ENCODE measurements at regions of chr9 and their contacts with region 1.

Region 1: DNA sequence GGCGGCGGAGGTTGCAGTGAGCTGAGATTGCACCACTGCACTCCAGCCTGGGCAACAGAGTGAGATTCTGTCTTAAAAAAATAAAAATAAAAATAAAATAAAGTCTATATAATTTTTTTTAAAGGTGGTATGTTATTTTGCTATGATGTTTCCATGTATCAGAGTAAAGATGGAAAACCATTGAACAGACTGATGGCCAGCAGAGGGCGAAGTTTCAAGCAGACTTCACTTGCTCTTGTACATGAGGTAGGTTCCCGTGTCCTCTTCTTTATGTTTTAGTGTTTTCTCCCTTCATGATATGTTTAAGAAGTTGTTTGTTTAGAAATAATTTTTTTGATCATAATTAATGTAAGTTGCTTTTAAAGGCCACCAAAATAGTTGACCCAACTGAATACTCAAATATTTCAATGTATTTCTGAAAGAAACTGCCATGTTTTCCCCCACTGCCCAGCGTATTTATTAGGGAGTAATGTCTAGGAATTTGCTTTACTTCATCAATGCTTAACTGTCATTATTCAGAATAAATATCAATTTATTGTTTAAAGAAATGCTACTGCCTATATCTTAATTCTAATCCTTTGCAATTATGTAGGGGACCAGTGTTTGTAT is 146.4 kb downstream of the HACD4 start:
- DNase-seq: peak; percentile 75
- H3K4me3 Mint-ChIP-seq: no peak overlapping the region
- H3K27ac Mint-ChIP-seq: no peak overlapping the region
- H3K4me1 Mint-ChIP-seq: no peaks in the 10 kb centered on the region
- H3K27me3 Mint-ChIP-seq: no peaks in the 10 kb centered on the region

Region 2: GRCh38 chr9:20873240-20873865 is 11.7 kb before region 1 on chr9:
- CTCF ChIA-PET with region 1: interaction called, 12 read pairs
- DNase-seq: no peak
- H3K4me3 Mint-ChIP-seq: no peak overlapping the region
- H3K27ac Mint-ChIP-seq: no peak overlapping the region
- H3K4me1 Mint-ChIP-seq: peaks cover 10% of the 10 kb centered on the region
- H3K27me3 Mint-ChIP-seq: no peaks in the 10 kb centered on the region

Region 3: GRCh38 chr9:21027295-21027694 is 142.2 kb after region 1 on chr9:
- CTCF ChIA-PET with region 1: no interaction called
- DNase-seq: no peak
- H3K4me3 Mint-ChIP-seq: no peak overlapping the region
- H3K27ac Mint-ChIP-seq: no peak overlapping the region
- H3K4me1 Mint-ChIP-seq: peaks cover 35% of the 10 kb centered on the region
- H3K27me3 Mint-ChIP-seq: no peaks in the 10 kb centered on the region

Region 4: GRCh38 chr9:21110708-21111576 is 225.9 kb after region 1 on chr9:
- CTCF ChIA-PET with region 1: interaction called, 39 read pairs
- DNase-seq: no peak
- H3K4me3 Mint-ChIP-seq: no peak overlapping the region
- H3K27ac Mint-ChIP-seq: no peak overlapping the region
- H3K4me1 Mint-ChIP-seq: no peaks in the 10 kb centered on the region
- H3K27me3 Mint-ChIP-seq: peaks cover 10% of the 10 kb centered on the region

Measured in activated naive CD4-positive, alpha-beta T cell treated with anti-CD3 and anti-CD28 coated beads, Interleukin-2, amount 10 ng/mL, durations not matched to agents 7 days and 5 days (primary cell).